CD8-positive, alpha-beta T cell (primary cell): ENCODE measurements at regions of chr3 and their contacts with region 1.

Region 1: DNA sequence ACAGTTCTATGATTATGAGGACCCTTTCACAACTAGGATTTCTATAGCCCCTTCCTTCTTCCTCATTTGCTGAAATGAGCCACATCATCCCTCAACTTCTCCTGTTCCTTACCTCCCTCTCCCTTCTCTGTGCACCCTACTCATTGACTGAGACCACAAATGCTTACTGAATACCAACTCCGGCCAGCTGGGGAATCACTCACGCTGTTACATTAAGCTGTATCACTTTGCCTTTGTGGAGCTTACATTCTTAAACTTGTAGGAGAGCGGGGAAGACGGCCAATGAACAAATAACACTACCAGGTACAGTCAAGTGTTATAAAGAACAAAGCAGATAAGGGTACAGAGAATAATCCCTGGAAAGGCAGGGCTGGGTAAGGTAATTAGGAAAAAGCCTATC is 5.7 kb downstream of the SUCLG2 start:
- DNase-seq: no peak
- ATAC-seq: no peak
- H3K4me3 ChIP-seq: no peak overlapping the region
- H3K4me3 Mint-ChIP-seq: no peak overlapping the region
- H3K27ac ChIP-seq: no peak overlapping the region
- H3K27ac Mint-ChIP-seq: no peak overlapping the region
- H3K4me1 ChIP-seq: peaks cover 56% of the 10 kb centered on the region
- H3K4me1 Mint-ChIP-seq: peaks cover 92% of the 10 kb centered on the region
- H3K27me3 ChIP-seq: no peaks in the 10 kb centered on the region
- H3K27me3 Mint-ChIP-seq: no peaks in the 10 kb centered on the region
- CTCF ChIP-seq: no peak

Region 2: GRCh38 chr3:67941433-67942030 is 292.8 kb after region 1 on chr3:
- CTCF ChIA-PET with region 1: no interaction called
- POLR2A ChIA-PET with region 1: no interaction called
- intact Hi-C with region 1: loop called in 1 of 2 experiments (anchors 1 kb)
- DNase-seq: peak in 1 of 9 experiments; percentile 20
- ATAC-seq: peak; percentile 70
- H3K4me3 ChIP-seq: no peak overlapping the region
- H3K4me3 Mint-ChIP-seq: peak overlapping the region; percentile 19
- H3K27ac ChIP-seq: peak overlapping the region in 1 of 2 experiments; percentile 18
- H3K27ac Mint-ChIP-seq: peak overlapping the region; percentile 87
- H3K4me1 ChIP-seq: peaks cover 21% of the 10 kb centered on the region
- H3K4me1 Mint-ChIP-seq: peaks cover 32% of the 10 kb centered on the region
- H3K27me3 ChIP-seq: no peaks in the 10 kb centered on the region
- H3K27me3 Mint-ChIP-seq: no peaks in the 10 kb centered on the region
- CTCF ChIP-seq: no peak